T-cell (primary cell): ENCODE measurements at regions of chr13 and their contacts with region 1.

Region 1: GRCh38 chr13:45464687-45465453 is at the start of gene COG3:
- DNase-seq: peak; percentile 86 to 97 (median 92)
- ATAC-seq: peak; percentile 94 to 97 (median 95)
- H3K4me3 ChIP-seq: peak within 1 kb of the TSS; percentile 90 to 98
- H3K4me3 Mint-ChIP-seq: peak within 1 kb of the TSS; percentile 89 to 91 (median 90)
- H3K27ac ChIP-seq: peak within 1 kb of the TSS; percentile 87
- H3K27ac Mint-ChIP-seq: peak within 1 kb of the TSS; percentile 92 to 96
- H3K4me1 ChIP-seq: peaks cover 26% of the 10 kb centered on the region in 2 experiments
- H3K4me1 Mint-ChIP-seq: peaks cover 58 to 65% (median 61%) of the 10 kb centered on the region in 3 donors
- H3K27me3 ChIP-seq: no peaks in the 10 kb centered on the region
- H3K27me3 Mint-ChIP-seq: no peaks in the 10 kb centered on the region
- total RNA-seq, gene COG3: 40.0 to 47.0 (median 42.3) TPM

Region 2: GRCh38 chr13:45417790-45418534 is 46.9 kb before region 1 on chr13 and contains the start of gene SLC25A30:
- CTCF ChIA-PET with region 1: interaction called, 3 to 18 read pairs
- POLR2A ChIA-PET with region 1: no interaction called
- DNase-seq: peak; percentile 77 to 94 (median 88)
- ATAC-seq: peak; percentile 92 to 95 (median 94)
- H3K4me3 ChIP-seq: peak within 1 kb of the TSS; percentile 58 to 93
- H3K4me3 Mint-ChIP-seq: peak within 1 kb of the TSS; percentile 94 to 97 (median 95)
- H3K27ac ChIP-seq: peak within 1 kb of the TSS; percentile 89
- H3K27ac Mint-ChIP-seq: peak within 1 kb of the TSS; percentile 96 to 98
- H3K4me1 ChIP-seq: peaks cover 6 to 29% of the 10 kb centered on the region in 2 experiments
- H3K4me1 Mint-ChIP-seq: peaks cover 27 to 28% (median 28%) of the 10 kb centered on the region in 3 donors
- H3K27me3 ChIP-seq: no peaks in the 10 kb centered on the region
- H3K27me3 Mint-ChIP-seq: no peaks in the 10 kb centered on the region
- total RNA-seq, gene SLC25A30: 19.5 to 25.9 (median 24.2) TPM

Region 3: GRCh38 chr13:45454204-45454603 is 10.7 kb before region 1 on chr13:
- CTCF ChIA-PET with region 1: no interaction called
- POLR2A ChIA-PET with region 1: no interaction called
- DNase-seq: no peak
- ATAC-seq: no peak
- H3K4me3 ChIP-seq: no peak overlapping the region
- H3K4me3 Mint-ChIP-seq: no peak overlapping the region
- H3K27ac ChIP-seq: no peak overlapping the region
- H3K27ac Mint-ChIP-seq: no peak overlapping the region
- H3K4me1 ChIP-seq: no peaks in the 10 kb centered on the region
- H3K4me1 Mint-ChIP-seq: peaks cover 0 to 2% (median 0%) of the 10 kb centered on the region in 3 donors
- H3K27me3 ChIP-seq: peaks cover 0 to 19% of the 10 kb centered on the region in 2 experiments
- H3K27me3 Mint-ChIP-seq: peaks cover 0 to 7% of the 10 kb centered on the region in 2 donors